K562 (cell line): ENCODE measurements at regions of chr9 and their contacts with region 1.

Region 1: DNA sequence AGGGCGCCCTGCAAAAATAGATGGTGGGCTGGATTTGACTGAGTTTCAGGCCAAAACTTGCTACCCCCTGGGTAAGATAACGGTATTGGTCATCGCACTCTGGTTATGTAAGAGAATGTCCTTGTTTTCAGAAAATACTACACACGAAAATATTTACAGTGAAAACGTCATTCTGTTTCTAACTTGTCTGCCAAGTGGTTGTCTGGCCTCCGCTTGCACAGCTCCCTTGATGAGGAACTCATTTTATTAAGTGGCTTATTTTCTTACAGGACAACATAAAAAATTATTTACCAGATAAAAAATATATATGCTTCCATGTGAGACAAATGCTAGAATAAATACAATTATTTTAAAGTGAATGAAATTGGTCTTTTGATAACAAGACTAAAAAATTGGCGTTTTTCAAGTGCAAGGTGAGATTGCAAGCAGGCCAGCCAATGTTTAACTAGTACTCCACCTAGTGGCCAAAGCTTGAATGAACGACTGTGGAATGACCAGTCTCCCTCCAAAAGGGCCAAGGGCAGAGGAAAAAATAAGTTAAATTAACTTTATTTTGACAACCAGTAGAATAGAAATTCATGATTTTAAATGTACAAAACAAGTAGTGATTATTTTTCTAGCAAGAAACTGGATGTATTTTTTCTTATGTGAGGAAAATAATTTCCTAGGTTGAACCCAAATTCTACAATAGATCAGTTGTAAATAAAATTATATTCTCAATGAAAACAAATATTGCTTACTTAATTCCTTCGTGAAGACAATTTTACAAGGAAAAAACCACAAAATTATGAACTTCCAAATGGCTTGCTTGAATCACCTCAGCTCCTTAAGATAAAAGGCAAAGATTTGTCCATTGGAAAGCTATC is 93.2 kb downstream of the ZFAND5 start:
- DNase-seq: peak; percentile 58 to 68 (median 65)
- ATAC-seq: peak; percentile 86
- H3K4me3 ChIP-seq: no peak overlapping the region
- H3K27ac ChIP-seq: no peak overlapping the region
- H3K4me1 ChIP-seq: no peaks in the 10 kb centered on the region
- H3K27me3 ChIP-seq: peaks cover 0 to 10% of the 10 kb centered on the region in 2 experiments; a peak in 2 of 5 replicates
- CTCF ChIP-seq: peak; percentile 59 to 74 (median 63)
- EP300 ChIP-seq: no peak
- POLR2A ChIP-seq: no peak
- RAD21 ChIP-seq: peak; percentile 65 to 79

Region 2: DNA sequence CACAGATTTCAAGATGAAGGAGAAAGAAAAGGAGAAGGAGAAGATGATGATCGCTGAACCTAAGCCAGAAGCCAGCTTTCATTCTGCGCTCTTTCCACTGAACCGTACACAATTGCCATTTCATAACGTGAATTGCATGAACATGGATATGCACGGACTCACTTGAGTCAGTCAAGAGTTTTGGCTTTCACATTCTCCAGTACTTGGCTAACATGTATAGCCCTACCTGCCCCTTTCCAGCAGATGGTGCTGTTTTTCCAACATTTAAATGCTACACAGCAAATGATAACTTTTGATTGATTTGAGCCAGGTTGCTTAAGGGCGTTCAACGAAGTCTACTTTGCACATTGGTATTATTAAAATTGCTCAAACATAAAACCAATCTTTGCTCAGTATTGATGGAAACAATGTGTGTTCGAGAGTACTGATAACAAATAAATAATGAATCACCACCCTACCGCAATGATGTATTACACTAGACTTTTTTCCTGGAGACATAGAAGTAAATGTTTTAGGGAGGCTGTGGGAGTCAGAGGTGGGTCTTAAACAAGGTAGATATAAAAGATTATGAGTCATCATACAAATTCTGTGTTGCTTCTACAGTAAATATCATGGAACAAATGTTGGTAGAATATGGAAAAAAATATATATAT is 1346.8 kb before region 1 on chr9:
- CTCF ChIA-PET with region 1: no interaction called
- POLR2A ChIA-PET with region 1: no interaction called
- in situ Hi-C with region 1: loop called (anchors 25 kb)
- intact Hi-C with region 1: no loop called
- DNase-seq: peak; percentile 7 to 37 (median 14)
- ATAC-seq: peak; percentile 79
- H3K4me3 ChIP-seq: no peak overlapping the region
- H3K27ac ChIP-seq: no peak overlapping the region
- H3K4me1 ChIP-seq: no peaks in the 10 kb centered on the region
- H3K27me3 ChIP-seq: no peaks in the 10 kb centered on the region
- CTCF ChIP-seq: peak; percentile 55 to 64 (median 57)
- EP300 ChIP-seq: no peak
- POLR2A ChIP-seq: no peak
- RAD21 ChIP-seq: peak; percentile 45 to 66

Region 3: GRCh38 chr9:71806901-71807307 is 464.9 kb before region 1 on chr9:
- CTCF ChIA-PET with region 1: interaction called, 4 read pairs
- POLR2A ChIA-PET with region 1: no interaction called
- in situ Hi-C with region 1: loop called (anchors 25 kb)
- intact Hi-C with region 1: loop called (anchors 10 kb)
- DNase-seq: peak; percentile 18 to 57 (median 30)
- ATAC-seq: peak; percentile 94
- H3K4me3 ChIP-seq: no peak overlapping the region
- H3K27ac ChIP-seq: no peak overlapping the region
- H3K4me1 ChIP-seq: no peaks in the 10 kb centered on the region
- H3K27me3 ChIP-seq: no peaks in the 10 kb centered on the region; a peak in 1 of 5 replicates
- CTCF ChIP-seq: peak; percentile 76 to 88 (median 78)
- EP300 ChIP-seq: no peak
- POLR2A ChIP-seq: no peak
- RAD21 ChIP-seq: peak; percentile 76 to 87

Region 4: DNA sequence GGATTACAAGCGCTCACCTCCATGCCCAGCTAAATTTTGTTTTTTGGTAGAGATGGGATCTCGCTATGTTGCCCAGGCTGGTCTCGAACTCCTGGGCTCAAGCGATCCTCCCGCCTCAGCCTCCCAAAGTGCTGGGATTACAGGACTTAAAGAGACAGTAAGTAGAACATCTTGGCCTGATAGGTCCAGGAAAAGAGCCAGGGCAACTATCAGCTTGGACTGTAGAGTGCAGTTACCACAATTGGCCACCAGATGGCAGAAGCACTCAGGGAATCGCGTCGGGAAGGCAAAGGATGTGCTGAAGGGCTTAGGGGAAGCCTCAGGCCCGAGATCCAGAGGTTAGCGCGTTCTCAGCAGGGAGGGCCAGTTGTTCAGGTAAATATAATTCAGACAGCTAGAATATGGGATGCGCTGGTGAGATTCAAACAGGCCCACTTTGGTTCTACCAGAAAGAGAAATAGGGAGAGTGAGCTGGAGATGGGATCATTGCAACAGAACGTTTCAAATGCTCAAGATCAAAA is 232.9 kb before region 1 on chr9:
- CTCF ChIA-PET with region 1: interaction called, 15 read pairs
- POLR2A ChIA-PET with region 1: no interaction called
- in situ Hi-C with region 1: loop called (anchors 5 kb)
- intact Hi-C with region 1: loop called (anchors 1 kb)
- DNase-seq: peak; percentile 59 to 73 (median 69)
- ATAC-seq: peak; percentile 93
- H3K4me3 ChIP-seq: no peak overlapping the region
- H3K27ac ChIP-seq: no peak overlapping the region
- H3K4me1 ChIP-seq: no peaks in the 10 kb centered on the region
- H3K27me3 ChIP-seq: peaks cover 0 to 14% of the 10 kb centered on the region in 2 experiments; a peak in 4 of 5 replicates
- CTCF ChIP-seq: peak; percentile 79 to 87 (median 86)
- EP300 ChIP-seq: no peak
- POLR2A ChIP-seq: no peak
- RAD21 ChIP-seq: peak; percentile 89 to 93

Region 5: GRCh38 chr9:72509635-72510034 is 237.8 kb after region 1 on chr9:
- CTCF ChIA-PET with region 1: no interaction called
- POLR2A ChIA-PET with region 1: no interaction called
- in situ Hi-C with region 1: no loop called
- intact Hi-C with region 1: no loop called
- DNase-seq: no peak
- ATAC-seq: no peak
- H3K4me3 ChIP-seq: no peak overlapping the region
- H3K27ac ChIP-seq: no peak overlapping the region
- H3K4me1 ChIP-seq: no peaks in the 10 kb centered on the region; a peak in 1 of 5 replicates
- H3K27me3 ChIP-seq: no peaks in the 10 kb centered on the region
- CTCF ChIP-seq: no peak
- EP300 ChIP-seq: no peak
- POLR2A ChIP-seq: no peak
- RAD21 ChIP-seq: no peak

Region 6: GRCh38 chr9:72615931-72616330 is 344.1 kb after region 1 on chr9:
- CTCF ChIA-PET with region 1: no interaction called
- POLR2A ChIA-PET with region 1: no interaction called
- in situ Hi-C with region 1: loop called (anchors 10 kb)
- intact Hi-C with region 1: no loop called
- DNase-seq: no peak
- ATAC-seq: no peak
- H3K4me3 ChIP-seq: no peak overlapping the region
- H3K27ac ChIP-seq: no peak overlapping the region
- H3K4me1 ChIP-seq: no peaks in the 10 kb centered on the region
- H3K27me3 ChIP-seq: no peaks in the 10 kb centered on the region; a peak in 3 of 5 replicates
- CTCF ChIP-seq: no peak
- EP300 ChIP-seq: no peak
- POLR2A ChIP-seq: no peak
- RAD21 ChIP-seq: no peak

Region 7: DNA sequence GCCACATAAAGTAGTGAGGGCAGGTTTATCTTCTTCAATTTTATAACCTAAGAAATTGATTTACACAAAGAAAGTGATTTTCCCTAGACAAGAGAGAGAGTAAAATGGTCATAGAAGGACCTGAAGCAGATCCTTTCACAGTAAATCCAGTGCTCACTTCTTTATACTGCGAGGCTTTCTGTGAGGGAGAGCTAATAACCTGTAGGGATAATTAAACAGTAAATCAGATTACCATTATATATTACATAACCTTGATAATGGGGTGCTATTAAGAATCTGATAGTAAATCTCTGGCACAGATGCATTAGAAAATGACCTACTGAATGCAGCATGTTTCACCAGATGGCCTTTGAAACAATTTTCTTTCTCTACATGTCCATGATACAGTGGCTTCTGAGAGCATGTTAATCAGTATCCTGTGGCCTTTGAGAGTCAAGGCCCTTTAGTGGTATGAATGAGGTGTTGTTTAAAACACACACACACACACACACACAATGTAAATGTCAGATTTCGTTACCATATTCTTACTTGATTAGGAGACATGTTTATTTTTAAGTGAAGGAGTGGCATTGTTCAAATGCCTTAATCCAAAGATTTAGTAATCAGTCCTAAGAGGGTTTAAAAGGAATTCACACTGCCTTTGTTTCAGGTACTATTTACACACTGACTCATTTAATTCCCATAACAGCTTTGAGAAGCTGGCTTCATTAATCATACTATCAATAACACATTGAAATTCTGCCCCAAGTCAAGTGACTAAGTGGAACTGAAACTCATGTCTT is 556.3 kb after region 1 on chr9:
- CTCF ChIA-PET with region 1: no interaction called
- POLR2A ChIA-PET with region 1: no interaction called
- in situ Hi-C with region 1: loop called (anchors 10 kb)
- intact Hi-C with region 1: loop called (anchors 5 kb)
- DNase-seq: no peak
- ATAC-seq: no peak
- H3K4me3 ChIP-seq: no peak overlapping the region
- H3K27ac ChIP-seq: no peak overlapping the region
- H3K4me1 ChIP-seq: no peaks in the 10 kb centered on the region
- H3K27me3 ChIP-seq: no peaks in the 10 kb centered on the region; a peak in 2 of 5 replicates
- CTCF ChIP-seq: no peak
- EP300 ChIP-seq: no peak
- POLR2A ChIP-seq: no peak
- RAD21 ChIP-seq: no peak